HEK293 (cell line): ENCODE measurements at regions of chr11 and their contacts with region 1.

Region 1: GRCh38 chr11:86955361-86956120 is at the start of gene FZD4:
- H3K4me3 ChIP-seq: peak within 1 kb of the TSS; percentile 75
- H3K27ac ChIP-seq: peak within 1 kb of the TSS; percentile 74
- H3K4me1 ChIP-seq: no peaks in the 10 kb centered on the region
- CTCF ChIP-seq: peak; percentile 52

Region 2: DNA sequence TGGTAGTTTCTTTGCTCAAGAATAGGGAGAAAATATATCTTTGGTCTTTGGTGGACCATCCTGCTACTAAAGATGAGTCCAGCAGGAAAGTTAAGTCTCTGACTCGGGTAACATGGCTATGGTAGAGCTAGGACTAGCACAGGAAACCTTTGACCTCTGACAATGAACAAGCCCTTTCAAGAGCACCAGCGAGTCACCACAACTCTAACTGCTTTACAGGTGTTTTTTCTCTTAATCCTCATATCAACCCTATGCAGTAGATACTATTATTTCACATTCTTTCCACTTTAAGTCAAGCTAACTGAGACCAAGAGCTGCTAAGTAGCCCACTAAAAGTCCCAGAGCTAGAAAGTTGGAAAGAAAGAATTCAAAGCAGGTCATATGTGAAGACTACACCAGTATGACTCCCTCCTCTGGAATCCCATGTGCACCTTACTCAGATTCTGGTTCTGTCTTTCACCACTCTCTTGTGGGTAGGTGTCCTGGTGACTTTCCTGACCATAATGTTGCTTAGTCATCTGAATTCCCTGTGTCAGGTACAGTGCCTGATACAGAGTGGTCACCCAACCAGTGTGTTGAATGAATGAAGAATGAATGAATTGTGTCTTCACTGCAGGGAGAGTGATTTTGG is 229.3 kb before region 1 on chr11:
- CTCF ChIA-PET with region 1: no interaction called
- POLR2A ChIA-PET with region 1: no interaction called
- H3K4me3 ChIP-seq: no peak overlapping the region
- H3K27ac ChIP-seq: no peak overlapping the region
- H3K4me1 ChIP-seq: no peaks in the 10 kb centered on the region
- CTCF ChIP-seq: no peak

Region 3: GRCh38 chr11:86888164-86889000 is 67.2 kb before region 1 on chr11:
- CTCF ChIA-PET with region 1: no interaction called
- POLR2A ChIA-PET with region 1: no interaction called
- H3K4me3 ChIP-seq: no peak overlapping the region
- H3K27ac ChIP-seq: no peak overlapping the region
- H3K4me1 ChIP-seq: no peaks in the 10 kb centered on the region
- CTCF ChIP-seq: no peak

Region 4: GRCh38 chr11:86999859-87000753 is 44.6 kb after region 1 on chr11:
- CTCF ChIA-PET with region 1: no interaction called
- POLR2A ChIA-PET with region 1: interaction called, 10 read pairs
- H3K4me3 ChIP-seq: no peak overlapping the region
- H3K27ac ChIP-seq: no peak overlapping the region
- H3K4me1 ChIP-seq: no peaks in the 10 kb centered on the region
- CTCF ChIP-seq: no peak

Region 5: DNA sequence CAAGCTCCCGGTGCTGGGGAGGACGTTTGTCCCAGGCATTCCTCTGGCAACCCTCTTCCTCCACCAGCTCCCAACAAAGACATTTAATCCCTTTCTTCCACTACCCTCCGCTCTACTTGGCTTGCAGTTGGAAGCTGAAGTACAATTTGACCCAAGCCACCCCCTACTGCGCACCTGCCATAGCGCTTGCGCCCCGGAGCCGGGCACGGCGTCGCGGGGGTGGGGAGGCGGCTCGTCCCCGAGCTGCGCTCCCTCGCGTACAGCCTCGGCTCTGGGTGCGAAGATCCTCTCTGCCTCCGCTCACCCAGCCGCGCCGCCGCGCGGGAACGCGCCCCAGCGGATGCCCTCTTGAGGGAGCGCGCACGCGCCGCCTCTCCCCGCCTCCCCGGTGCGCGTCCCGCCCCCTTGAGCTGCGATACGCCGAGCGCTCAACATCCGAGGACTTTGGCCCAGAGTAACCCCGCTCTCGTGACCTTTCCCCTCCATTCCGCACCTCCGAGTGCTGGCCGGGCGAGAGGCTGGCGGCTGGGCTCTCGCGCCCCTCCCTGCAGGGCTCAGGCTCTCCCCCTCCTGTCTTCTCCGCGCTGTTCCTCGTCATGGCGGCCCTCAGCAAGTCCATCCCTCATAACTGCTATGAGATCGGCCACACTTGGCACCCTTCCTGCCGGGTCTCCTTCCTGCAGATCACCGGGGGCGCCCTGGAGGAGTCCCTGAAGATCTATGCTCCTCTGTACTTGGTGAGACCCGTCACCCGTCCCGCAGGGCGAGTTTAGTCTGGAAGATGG is 82.1 kb after region 1 on chr11 and contains the start of gene TMEM135:
- CTCF ChIA-PET with region 1: no interaction called
- POLR2A ChIA-PET with region 1: interaction called, 15 read pairs
- H3K4me3 ChIP-seq: peak within 1 kb of the TSS; percentile 94
- H3K27ac ChIP-seq: peak within 1 kb of the TSS; percentile 73
- H3K4me1 ChIP-seq: no peaks in the 10 kb centered on the region
- CTCF ChIP-seq: peak; percentile 73; the same call in 1 of the 2 replicates